Naive thymus-derived CD4-positive, alpha-beta T cell (primary cell): ENCODE measurements at regions of chr16 and their contacts with region 1.

Region 1: GRCh38 chr16:3094289-3095027 is 4.6 kb downstream of the ZSCAN10 start:
- DNase-seq: peak in 8 of 9 donors; percentile 32 to 62 (median 54)
- ATAC-seq: peak; percentile 59
- H3K4me3 ChIP-seq: no peak overlapping the region
- H3K4me3 Mint-ChIP-seq: peak overlapping the region in 4 of 10 donors; percentile 27 to 63 (median 45)
- H3K27ac ChIP-seq: no peak overlapping the region
- H3K27ac Mint-ChIP-seq: peak overlapping the region; percentile 0 to 90 (median 72)
- H3K4me1 ChIP-seq: peaks cover 23 to 30% of the 10 kb centered on the region in 2 donors
- H3K4me1 Mint-ChIP-seq: peaks cover 9 to 57% (median 43%) of the 10 kb centered on the region in 7 donors
- H3K27me3 ChIP-seq: no peaks in the 10 kb centered on the region
- H3K27me3 Mint-ChIP-seq: no peaks in the 10 kb centered on the region

Region 2: DNA sequence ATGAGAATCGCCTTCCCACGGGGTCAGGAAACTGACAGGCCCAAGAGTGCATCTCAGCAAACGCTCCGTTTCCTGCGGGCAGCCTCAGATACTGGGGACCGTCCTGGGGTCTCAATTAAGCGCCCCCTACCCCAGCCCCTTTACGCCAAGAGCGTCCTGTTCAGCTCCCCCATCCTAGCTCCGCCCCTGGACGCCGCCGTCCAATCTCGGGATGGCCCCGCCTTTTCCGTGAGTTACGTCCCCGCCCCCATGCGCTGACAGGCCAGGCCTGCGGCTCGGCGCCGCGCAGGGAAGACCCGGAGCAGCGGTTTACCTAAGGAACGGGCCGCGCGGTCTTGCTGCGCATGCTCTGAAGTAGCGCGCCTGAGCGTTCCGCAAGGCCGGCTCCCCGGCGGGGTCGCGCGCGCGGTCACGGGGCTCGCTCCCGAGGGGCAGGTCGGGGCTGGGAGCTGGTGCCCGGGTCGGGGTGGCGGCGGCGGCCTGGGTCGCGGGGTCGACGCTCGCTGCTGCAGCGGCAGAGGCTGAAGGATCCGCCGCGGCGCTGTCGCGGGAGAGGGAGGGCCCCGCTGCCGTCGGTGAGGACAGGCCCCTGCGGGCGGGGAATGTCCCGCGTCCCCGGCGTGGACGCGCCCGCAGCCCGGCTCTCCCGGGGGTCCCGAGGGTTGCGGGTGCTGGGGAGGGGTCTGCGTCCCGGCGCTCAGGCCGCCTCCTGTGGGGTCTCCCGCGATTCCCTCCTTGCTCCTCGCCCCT is 182.7 kb before region 1 on chr16 and contains the start of gene FLYWCH1:
- CTCF ChIA-PET with region 1: no interaction called
- POLR2A ChIA-PET with region 1: no interaction called
- intact Hi-C with region 1: no loop called
- DNase-seq: peak; percentile 94 to 99 (median 97)
- ATAC-seq: peak; percentile 99
- H3K4me3 ChIP-seq: peak within 1 kb of the TSS; percentile 85
- H3K4me3 Mint-ChIP-seq: peak within 1 kb of the TSS; percentile 80 to 97 (median 92)
- H3K27ac ChIP-seq: peak within 1 kb of the TSS; percentile 78
- H3K27ac Mint-ChIP-seq: peak within 1 kb of the TSS; percentile 80 to 96 (median 87)
- H3K4me1 ChIP-seq: peaks cover 7 to 8% of the 10 kb centered on the region in 2 donors
- H3K4me1 Mint-ChIP-seq: peaks cover 11 to 39% (median 30%) of the 10 kb centered on the region in 7 donors
- H3K27me3 ChIP-seq: no peaks in the 10 kb centered on the region
- H3K27me3 Mint-ChIP-seq: peaks cover 0 to 10% (median 0%) of the 10 kb centered on the region in 5 donors
- total RNA-seq, gene FLYWCH1: 48.6 to 149 (median 87.0) TPM

Region 3: DNA sequence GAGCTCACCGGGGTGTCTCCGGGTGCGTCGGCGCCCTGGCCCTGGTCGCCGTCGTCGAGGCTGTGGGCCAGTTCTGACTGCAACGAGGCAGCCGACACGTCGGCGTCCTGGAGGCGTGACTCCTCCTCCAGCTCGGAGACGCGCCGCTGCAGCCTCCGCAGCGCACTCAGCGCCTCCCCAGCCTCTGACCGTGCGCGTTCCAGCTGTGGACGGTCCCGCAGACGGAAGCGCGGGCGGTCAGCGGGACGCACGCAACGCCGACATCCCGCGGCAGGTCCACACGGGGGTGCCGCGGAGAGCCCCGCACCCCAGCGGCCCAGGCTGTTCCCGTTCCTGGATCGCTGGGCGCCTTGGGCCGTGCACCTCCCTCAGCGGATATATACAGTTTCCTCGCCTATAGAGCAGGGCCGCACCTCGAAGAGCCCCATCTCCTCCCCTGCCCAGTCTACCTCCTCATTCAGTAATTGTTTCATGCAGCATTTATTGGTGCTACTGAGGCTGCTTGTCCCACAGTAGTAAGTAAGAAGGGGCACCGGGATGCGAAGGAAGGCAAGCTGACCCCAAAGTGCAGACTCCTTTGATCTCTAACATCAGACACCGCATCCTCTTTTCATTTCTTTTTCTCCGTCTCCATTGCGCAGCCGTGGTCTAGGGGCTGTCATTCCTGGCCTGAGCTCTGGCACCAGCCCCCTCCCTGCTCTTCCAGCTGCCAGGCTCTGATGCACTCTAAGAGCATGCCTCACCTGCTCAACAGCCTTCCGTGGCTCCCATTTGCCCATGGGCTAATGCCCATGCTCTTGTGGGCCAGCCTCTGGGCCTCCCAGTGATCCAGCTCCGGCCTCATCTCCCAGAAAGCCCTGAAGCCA is 64.7 kb before region 1 on chr16:
- CTCF ChIA-PET with region 1: interaction called, 4 read pairs
- POLR2A ChIA-PET with region 1: interaction called, 4 read pairs
- intact Hi-C with region 1: loop called in 1 of 2 experiments (anchors 2 kb)
- DNase-seq: peak in 1 of 9 donors; percentile 68
- ATAC-seq: peak; percentile 17
- H3K4me3 ChIP-seq: peak overlapping the region; percentile 43
- H3K4me3 Mint-ChIP-seq: peak overlapping the region; percentile 50 to 82 (median 70)
- H3K27ac ChIP-seq: no peak overlapping the region
- H3K27ac Mint-ChIP-seq: peak overlapping the region in 3 of 9 donors; percentile 26 to 60 (median 40)
- H3K4me1 ChIP-seq: peaks cover 18% of the 10 kb centered on the region in 2 donors
- H3K4me1 Mint-ChIP-seq: peaks cover 15 to 35% (median 25%) of the 10 kb centered on the region in 7 donors
- H3K27me3 ChIP-seq: peaks cover 6 to 9% of the 10 kb centered on the region in 2 donors
- H3K27me3 Mint-ChIP-seq: peaks cover 33 to 49% (median 37%) of the 10 kb centered on the region in 5 donors

Region 4: DNA sequence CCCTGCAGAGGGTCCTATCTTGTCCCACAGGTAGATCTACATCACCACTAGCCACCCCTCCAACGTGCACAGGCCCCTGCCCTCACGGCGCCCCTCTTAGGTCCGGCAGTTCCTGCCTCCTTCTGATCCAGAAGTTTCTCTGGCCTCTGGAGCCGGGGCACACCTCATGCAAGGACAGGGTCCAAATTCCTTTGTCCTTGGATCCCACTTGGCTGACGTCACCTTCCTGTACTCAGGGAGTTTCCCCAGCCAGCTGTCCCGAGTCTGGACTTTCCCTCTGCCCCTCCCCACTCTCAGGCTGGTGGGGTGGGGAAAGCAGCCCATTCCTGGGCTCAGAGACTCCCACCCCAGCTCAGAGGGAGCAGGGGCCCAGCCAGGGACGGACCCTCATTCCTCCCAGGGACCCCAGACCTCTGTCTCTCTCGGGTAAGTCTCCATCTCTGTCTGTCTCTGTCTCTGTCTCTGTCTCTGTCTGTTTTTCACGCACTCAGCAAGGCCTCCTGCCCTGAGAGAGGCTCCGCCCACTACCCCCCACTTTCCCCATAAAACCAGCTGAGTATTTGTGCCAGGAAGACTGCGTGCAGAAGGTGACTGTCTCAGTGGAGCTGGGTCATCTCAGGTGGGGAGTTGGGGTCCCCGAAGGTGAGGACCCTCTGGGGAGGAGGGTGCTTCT is 29.3 kb before region 1 on chr16 and contains the start of gene IL32:
- CTCF ChIA-PET with region 1: interaction called, 7 read pairs
- POLR2A ChIA-PET with region 1: interaction called, 65 read pairs
- intact Hi-C with region 1: no loop called
- DNase-seq: peak in 8 of 9 donors; percentile 43 to 69 (median 64)
- ATAC-seq: peak; percentile 78
- H3K4me3 ChIP-seq: peak within 1 kb of the TSS; percentile 78
- H3K4me3 Mint-ChIP-seq: peak within 1 kb of the TSS; percentile 98 to 100 (median 99)
- H3K27ac ChIP-seq: peak within 1 kb of the TSS; percentile 88
- H3K27ac Mint-ChIP-seq: peak within 1 kb of the TSS; percentile 94 to 100 (median 98)
- H3K4me1 ChIP-seq: peaks cover 25 to 27% of the 10 kb centered on the region in 2 donors
- H3K4me1 Mint-ChIP-seq: peaks cover 46 to 65% (median 60%) of the 10 kb centered on the region in 7 donors
- H3K27me3 ChIP-seq: no peaks in the 10 kb centered on the region
- H3K27me3 Mint-ChIP-seq: no peaks in the 10 kb centered on the region
- total RNA-seq, gene IL32: 351 to 3,697 (median 587) TPM

Region 5: GRCh38 chr16:3080024-3080423 is 14.4 kb before region 1 on chr16:
- CTCF ChIA-PET with region 1: interaction called, 45 read pairs
- POLR2A ChIA-PET with region 1: interaction called, 95 read pairs
- intact Hi-C with region 1: loop called in 1 of 2 experiments (anchors 1 kb)
- DNase-seq: no peak
- ATAC-seq: no peak
- H3K4me3 ChIP-seq: no peak overlapping the region
- H3K4me3 Mint-ChIP-seq: peak overlapping the region in 2 of 10 donors; percentile 3 to 48
- H3K27ac ChIP-seq: no peak overlapping the region
- H3K27ac Mint-ChIP-seq: peak overlapping the region in 7 of 9 donors; percentile 8 to 86 (median 38)
- H3K4me1 ChIP-seq: peaks cover 40 to 56% of the 10 kb centered on the region in 2 donors
- H3K4me1 Mint-ChIP-seq: peaks cover 44 to 91% (median 72%) of the 10 kb centered on the region in 7 donors
- H3K27me3 ChIP-seq: no peaks in the 10 kb centered on the region
- H3K27me3 Mint-ChIP-seq: no peaks in the 10 kb centered on the region

Region 6: DNA sequence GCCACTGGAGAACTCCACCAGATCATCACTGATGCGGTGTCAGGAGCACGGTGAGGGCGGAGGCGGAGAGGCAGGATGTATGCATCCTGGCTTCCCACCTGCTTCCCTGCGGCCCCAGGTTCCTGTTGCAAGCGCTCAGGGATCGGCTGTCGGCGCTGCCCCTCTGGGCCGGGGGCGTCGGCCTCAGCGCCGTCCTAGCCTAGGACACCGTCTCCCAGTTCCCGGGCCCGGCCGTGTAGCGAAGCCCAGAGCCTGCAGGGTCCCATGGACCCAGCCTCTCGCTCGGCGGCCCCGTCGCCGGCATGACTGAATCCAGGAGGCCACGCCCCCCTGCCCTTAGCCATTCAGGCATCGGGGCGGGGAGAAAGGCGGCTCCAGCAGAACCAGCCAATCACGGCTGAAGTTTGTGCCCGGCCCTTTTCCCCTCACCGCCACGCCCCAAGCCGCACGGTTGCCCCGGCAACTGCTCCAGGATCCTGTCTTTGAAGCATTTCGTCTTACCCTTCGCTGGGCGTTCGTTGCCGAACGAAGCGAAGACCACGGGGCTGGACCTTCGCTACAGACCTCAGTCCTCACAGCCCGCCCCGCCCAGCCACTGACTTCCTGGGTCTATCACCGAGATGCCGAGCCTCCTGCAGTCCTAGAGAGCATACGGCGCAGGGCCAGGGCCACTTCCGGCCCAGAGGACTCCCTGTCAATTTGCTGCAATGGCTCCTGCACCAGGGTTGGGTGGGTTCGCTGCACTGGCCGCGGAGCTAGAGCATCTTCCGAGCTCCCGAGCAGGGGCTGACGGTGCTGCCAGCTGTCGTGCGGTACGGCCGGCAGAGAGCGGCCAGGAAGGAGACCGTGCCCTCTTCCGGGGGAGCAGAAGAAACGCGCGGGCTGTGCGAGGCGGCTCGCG is 29.8 kb after region 1 on chr16:
- CTCF ChIA-PET with region 1: interaction called, 233 read pairs
- POLR2A ChIA-PET with region 1: interaction called, 40 read pairs
- intact Hi-C with region 1: loop called (anchors 1 kb)
- DNase-seq: peak; percentile 92 to 97 (median 96)
- ATAC-seq: peak; percentile 95
- H3K4me3 ChIP-seq: peak overlapping the region; percentile 90
- H3K4me3 Mint-ChIP-seq: peak overlapping the region; percentile 92 to 99 (median 96)
- H3K27ac ChIP-seq: peak overlapping the region; percentile 75
- H3K27ac Mint-ChIP-seq: peak overlapping the region; percentile 85 to 99 (median 97)
- H3K4me1 ChIP-seq: peaks cover 20 to 29% of the 10 kb centered on the region in 2 donors
- H3K4me1 Mint-ChIP-seq: peaks cover 16 to 51% (median 43%) of the 10 kb centered on the region in 7 donors
- H3K27me3 ChIP-seq: no peaks in the 10 kb centered on the region
- H3K27me3 Mint-ChIP-seq: no peaks in the 10 kb centered on the region

Region 7: GRCh38 chr16:3536271-3536731 is 441.8 kb after region 1 on chr16:
- CTCF ChIA-PET with region 1: no interaction called
- POLR2A ChIA-PET with region 1: no interaction called
- intact Hi-C with region 1: no loop called
- DNase-seq: no peak
- ATAC-seq: no peak
- H3K4me3 ChIP-seq: no peak overlapping the region
- H3K4me3 Mint-ChIP-seq: no peak overlapping the region
- H3K27ac ChIP-seq: no peak overlapping the region
- H3K27ac Mint-ChIP-seq: peak overlapping the region in 8 of 9 donors; percentile 21 to 89 (median 64)
- H3K4me1 ChIP-seq: no peaks in the 10 kb centered on the region
- H3K4me1 Mint-ChIP-seq: peaks cover 4 to 19% (median 11%) of the 10 kb centered on the region in 7 donors
- H3K27me3 ChIP-seq: no peaks in the 10 kb centered on the region
- H3K27me3 Mint-ChIP-seq: no peaks in the 10 kb centered on the region